CD4-positive, alpha-beta memory T cell (primary cell): ENCODE measurements at regions of chr3 and their contacts with region 1.

Region 1: GRCh38 chr3:195549931-195550519 is 6.9 kb upstream of the PPP1R2 start:
- DNase-seq: peak; percentile 87 to 96 (median 90)
- H3K4me3 ChIP-seq: peak overlapping the region in 1 of 2 donors; percentile 74
- H3K4me3 Mint-ChIP-seq: peak overlapping the region; percentile 84 to 94 (median 90)
- H3K27ac ChIP-seq: peak overlapping the region; percentile 70
- H3K27ac Mint-ChIP-seq: peak overlapping the region; percentile 92 to 99 (median 96)
- H3K4me1 ChIP-seq: peaks cover 88% of the 10 kb centered on the region
- H3K4me1 Mint-ChIP-seq: peaks cover 56 to 93% (median 77%) of the 10 kb centered on the region in 4 donors
- H3K27me3 ChIP-seq: no peaks in the 10 kb centered on the region
- H3K27me3 Mint-ChIP-seq: no peaks in the 10 kb centered on the region

Region 2: GRCh38 chr3:195442573-195443390 is 107.2 kb before region 1 on chr3 and contains the start of gene ACAP2:
- CTCF ChIA-PET with region 1: no interaction called
- POLR2A ChIA-PET with region 1: interaction called, 23 read pairs
- intact Hi-C with region 1: no loop called
- DNase-seq: peak; percentile 97 to 99 (median 98)
- H3K4me3 ChIP-seq: peak within 1 kb of the TSS; percentile 82 to 87
- H3K4me3 Mint-ChIP-seq: peak within 1 kb of the TSS; percentile 93 to 97 (median 94)
- H3K27ac ChIP-seq: peak within 1 kb of the TSS; percentile 89
- H3K27ac Mint-ChIP-seq: peak within 1 kb of the TSS; percentile 91 to 96 (median 94)
- H3K4me1 ChIP-seq: peaks cover 54% of the 10 kb centered on the region
- H3K4me1 Mint-ChIP-seq: peaks cover 32 to 60% (median 43%) of the 10 kb centered on the region in 4 donors
- H3K27me3 ChIP-seq: no peaks in the 10 kb centered on the region
- H3K27me3 Mint-ChIP-seq: no peaks in the 10 kb centered on the region
- total RNA-seq, gene ACAP2: 72.3 to 73.5 TPM

Region 3: DNA sequence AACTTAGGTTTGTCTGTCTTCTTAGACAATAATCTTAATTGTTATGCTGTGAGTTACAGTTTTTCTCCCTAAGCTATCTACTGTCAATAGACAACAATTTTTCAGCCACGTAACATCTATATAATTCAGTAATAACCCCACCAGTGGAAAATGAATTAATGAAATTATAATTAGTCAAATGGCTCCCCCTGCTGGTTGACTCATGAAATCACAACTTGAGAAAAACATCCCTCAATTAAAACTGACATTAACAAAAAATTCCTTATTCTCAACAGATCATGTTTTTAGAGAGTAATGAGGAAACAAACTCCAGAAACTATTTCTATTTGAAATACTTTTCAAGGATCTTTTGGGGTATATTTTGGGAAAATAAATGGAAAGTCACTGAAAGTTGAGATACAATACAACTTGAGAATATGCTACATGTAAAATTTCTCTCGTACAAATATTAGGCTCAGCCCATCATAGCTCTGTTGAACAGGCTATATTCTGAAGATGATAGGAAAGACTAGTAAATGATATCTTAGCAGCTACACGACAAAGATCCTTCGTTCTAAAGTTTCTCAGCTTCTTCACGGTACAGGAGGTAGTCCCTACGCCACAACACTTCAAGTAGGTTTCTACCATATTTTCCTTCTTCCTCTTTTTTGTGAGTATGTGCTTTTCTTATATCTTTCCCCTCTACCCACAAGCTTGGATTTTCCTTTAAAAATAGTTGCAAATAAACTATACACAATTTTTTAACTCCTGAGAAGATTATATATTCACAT is 27.6 kb before region 1 on chr3:
- CTCF ChIA-PET with region 1: interaction called, 12 read pairs
- POLR2A ChIA-PET with region 1: interaction called, 53 read pairs
- intact Hi-C with region 1: no loop called
- DNase-seq: peak in 4 of 5 donors; percentile 46 to 56 (median 54)
- H3K4me3 ChIP-seq: no peak overlapping the region
- H3K4me3 Mint-ChIP-seq: peak overlapping the region in 1 of 8 donors; percentile 31
- H3K27ac ChIP-seq: no peak overlapping the region
- H3K27ac Mint-ChIP-seq: peak overlapping the region; percentile 38 to 82 (median 58)
- H3K4me1 ChIP-seq: peaks cover 50% of the 10 kb centered on the region
- H3K4me1 Mint-ChIP-seq: peaks cover 36 to 51% (median 42%) of the 10 kb centered on the region in 4 donors
- H3K27me3 ChIP-seq: no peaks in the 10 kb centered on the region
- H3K27me3 Mint-ChIP-seq: no peaks in the 10 kb centered on the region

Region 4: GRCh38 chr3:195532834-195533233 is 17.2 kb before region 1 on chr3:
- CTCF ChIA-PET with region 1: interaction called, 11 read pairs
- POLR2A ChIA-PET with region 1: interaction called, 224 read pairs
- intact Hi-C with region 1: no loop called
- DNase-seq: no peak
- H3K4me3 ChIP-seq: no peak overlapping the region
- H3K4me3 Mint-ChIP-seq: peak overlapping the region in 6 of 8 donors; percentile 21 to 77 (median 58)
- H3K27ac ChIP-seq: no peak overlapping the region
- H3K27ac Mint-ChIP-seq: peak overlapping the region in 2 of 7 donors; percentile 27 to 86
- H3K4me1 ChIP-seq: peaks cover 87% of the 10 kb centered on the region
- H3K4me1 Mint-ChIP-seq: peaks cover 55 to 95% (median 73%) of the 10 kb centered on the region in 4 donors
- H3K27me3 ChIP-seq: no peaks in the 10 kb centered on the region
- H3K27me3 Mint-ChIP-seq: no peaks in the 10 kb centered on the region

Region 5: DNA sequence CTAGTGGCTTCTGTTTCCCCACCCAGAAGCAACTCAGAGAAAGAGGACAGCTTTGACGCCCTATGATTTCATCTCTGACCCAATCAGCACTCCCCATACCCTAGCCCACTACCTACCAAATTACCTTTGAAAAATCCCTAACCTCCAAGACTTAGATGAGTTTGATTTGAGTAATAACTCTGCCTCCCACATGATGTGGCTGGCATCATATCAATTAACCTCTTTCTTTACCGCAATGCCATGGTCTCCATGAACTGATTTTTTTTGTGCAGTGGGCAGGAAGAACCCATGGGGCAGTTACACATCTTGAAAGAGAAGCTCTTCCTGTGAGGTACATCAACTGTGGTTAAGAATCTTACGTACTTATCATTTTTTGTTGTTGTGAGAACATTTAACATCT is 59.2 kb after region 1 on chr3:
- CTCF ChIA-PET with region 1: no interaction called
- POLR2A ChIA-PET with region 1: interaction called, 12 read pairs
- intact Hi-C with region 1: loop called (anchors 1 kb)
- DNase-seq: peak; percentile 70 to 86 (median 82)
- H3K4me3 ChIP-seq: no peak overlapping the region
- H3K4me3 Mint-ChIP-seq: peak overlapping the region; percentile 23 to 75 (median 50)
- H3K27ac ChIP-seq: peak overlapping the region; percentile 7
- H3K27ac Mint-ChIP-seq: peak overlapping the region; percentile 66 to 97 (median 83)
- H3K4me1 ChIP-seq: peaks cover 25% of the 10 kb centered on the region
- H3K4me1 Mint-ChIP-seq: peaks cover 17 to 38% (median 29%) of the 10 kb centered on the region in 4 donors
- H3K27me3 ChIP-seq: no peaks in the 10 kb centered on the region
- H3K27me3 Mint-ChIP-seq: no peaks in the 10 kb centered on the region

Region 6: DNA sequence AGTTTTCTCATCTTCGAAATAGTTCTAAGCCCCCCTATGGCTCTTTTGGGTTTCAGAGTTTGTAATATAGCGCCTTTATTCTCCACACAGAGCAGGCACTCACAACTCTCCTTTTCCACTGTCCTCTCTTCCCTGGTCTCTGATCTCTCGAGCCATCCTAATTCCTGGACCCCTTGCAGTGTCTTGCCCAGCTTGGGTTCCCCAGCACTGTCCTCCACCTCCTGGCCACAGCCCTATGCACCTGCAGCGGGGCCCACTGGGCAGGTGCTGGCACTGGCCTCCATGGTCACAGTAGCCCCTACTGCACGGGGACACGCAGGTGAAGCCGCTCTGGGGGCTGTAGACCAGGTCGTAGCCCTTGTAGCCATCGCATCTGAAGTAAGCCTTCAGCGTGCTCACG is 198.6 kb after region 1 on chr3:
- CTCF ChIA-PET with region 1: no interaction called
- POLR2A ChIA-PET with region 1: no interaction called
- intact Hi-C with region 1: loop called (anchors 5 kb)
- DNase-seq: no peak
- H3K4me3 ChIP-seq: no peak overlapping the region
- H3K4me3 Mint-ChIP-seq: peak overlapping the region in 2 of 8 donors; percentile 24 to 43
- H3K27ac ChIP-seq: no peak overlapping the region
- H3K27ac Mint-ChIP-seq: peak overlapping the region in 1 of 7 donors; percentile 10
- H3K4me1 ChIP-seq: no peaks in the 10 kb centered on the region
- H3K4me1 Mint-ChIP-seq: peaks cover 0 to 12% (median 5%) of the 10 kb centered on the region in 4 donors
- H3K27me3 ChIP-seq: no peaks in the 10 kb centered on the region
- H3K27me3 Mint-ChIP-seq: peaks cover 0 to 3% of the 10 kb centered on the region in 2 donors

Region 7: DNA sequence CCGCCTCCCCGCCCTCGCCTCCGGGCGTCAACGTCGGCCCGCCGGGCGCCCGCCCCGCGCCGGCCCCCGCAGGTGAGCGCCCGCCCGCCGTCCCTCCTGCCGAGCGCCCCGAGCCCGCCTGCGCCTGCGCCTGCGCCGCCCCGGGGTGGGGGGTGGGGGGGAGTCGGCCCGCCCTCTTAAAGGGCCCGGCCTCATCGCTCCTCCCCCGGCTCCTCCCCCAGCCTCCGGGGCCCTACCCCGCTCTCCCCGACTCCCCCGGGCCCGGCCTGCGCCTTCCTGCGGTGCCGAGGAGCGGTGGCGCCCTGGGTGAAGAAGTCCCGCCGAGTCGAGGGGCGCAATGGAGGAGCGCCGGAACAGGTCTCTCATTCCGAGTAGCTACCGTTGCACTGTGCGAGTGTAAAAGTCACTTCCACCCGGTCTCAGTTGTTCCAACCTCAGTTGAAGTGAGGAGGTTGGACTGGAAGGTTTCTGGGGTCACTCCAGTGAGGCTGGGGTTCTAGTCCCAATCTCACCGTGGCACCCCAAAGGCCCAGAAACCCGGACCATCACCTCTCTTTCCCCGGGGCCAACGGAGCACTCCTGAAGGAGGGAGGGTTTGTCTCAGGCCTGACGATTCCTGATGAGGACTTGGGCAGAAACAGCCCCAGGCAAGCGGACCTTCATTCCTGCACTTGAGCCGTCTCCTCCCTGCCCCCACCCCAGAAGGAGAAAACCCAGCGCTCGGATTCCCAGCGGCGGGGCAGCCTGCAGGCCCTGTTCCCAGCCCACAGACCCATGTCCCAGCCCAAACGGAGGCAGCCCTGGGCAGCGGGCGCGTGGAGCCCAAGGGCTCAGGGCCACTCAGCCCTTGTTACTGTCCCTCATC is 359.9 kb after region 1 on chr3:
- CTCF ChIA-PET with region 1: interaction called, 4 read pairs
- POLR2A ChIA-PET with region 1: interaction called, 19 read pairs
- intact Hi-C with region 1: no loop called
- DNase-seq: peak; percentile 86 to 88 (median 87)
- H3K4me3 ChIP-seq: peak overlapping the region; percentile 42 to 47
- H3K4me3 Mint-ChIP-seq: peak overlapping the region; percentile 57 to 79 (median 65)
- H3K27ac ChIP-seq: peak overlapping the region; percentile 58
- H3K27ac Mint-ChIP-seq: peak overlapping the region in 6 of 7 donors; percentile 46 to 88 (median 76)
- H3K4me1 ChIP-seq: peaks cover 43% of the 10 kb centered on the region
- H3K4me1 Mint-ChIP-seq: peaks cover 22 to 46% (median 33%) of the 10 kb centered on the region in 4 donors
- H3K27me3 ChIP-seq: no peaks in the 10 kb centered on the region
- H3K27me3 Mint-ChIP-seq: no peaks in the 10 kb centered on the region

Region 8: DNA sequence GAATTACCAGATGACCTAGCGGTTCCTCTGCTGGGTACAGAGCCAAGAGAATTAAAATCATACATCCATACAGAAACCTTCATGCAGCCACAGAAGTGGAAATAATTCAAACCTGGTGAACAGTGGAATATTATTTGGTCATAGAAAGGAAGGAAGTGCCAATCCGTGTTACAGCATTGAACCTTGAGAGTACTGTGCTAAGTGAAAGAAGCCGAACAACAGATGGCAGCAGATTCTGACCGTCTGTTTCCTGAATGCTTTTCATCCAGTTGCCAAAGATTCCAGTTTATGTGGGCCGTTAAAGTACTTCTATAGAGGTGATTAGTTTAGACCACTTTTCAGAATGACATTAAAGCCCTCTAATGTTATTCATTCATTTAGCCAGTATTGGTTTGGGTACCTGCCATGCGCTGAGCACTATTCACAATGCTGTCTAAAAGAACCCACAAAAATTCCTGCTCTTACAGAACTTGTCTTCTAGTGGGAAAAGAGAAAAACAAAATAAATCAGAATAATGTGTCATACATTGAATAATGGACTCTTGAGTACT is 1271.9 kb after region 1 on chr3:
- CTCF ChIA-PET with region 1: no interaction called
- POLR2A ChIA-PET with region 1: no interaction called
- intact Hi-C with region 1: no loop called
- DNase-seq: no peak
- H3K4me3 ChIP-seq: no peak overlapping the region
- H3K4me3 Mint-ChIP-seq: no peak overlapping the region
- H3K27ac ChIP-seq: no peak overlapping the region
- H3K27ac Mint-ChIP-seq: peak overlapping the region in 1 of 7 donors; percentile 21
- H3K4me1 ChIP-seq: no peaks in the 10 kb centered on the region
- H3K4me1 Mint-ChIP-seq: peaks cover 0 to 2% (median 0%) of the 10 kb centered on the region in 4 donors
- H3K27me3 ChIP-seq: no peaks in the 10 kb centered on the region
- H3K27me3 Mint-ChIP-seq: no peaks in the 10 kb centered on the region